ENCODE measurements at regions of chrX and their contacts with region 1.

Region 1: GRCh38 chrX:65034668-65035445 is 58.6 kb upstream of the ZC4H2 start:
- DNase-seq: peak; percentile 90
- H3K4me3 ChIP-seq: peak within 1 kb of the TSS; percentile 56 to 71 (median 60)
- H3K27ac ChIP-seq: peak within 1 kb of the TSS; percentile 82 to 91 (median 88)
- H3K4me1 ChIP-seq: peaks cover 0 to 7% (median 0%) of the 10 kb centered on the region in 4 donors
- H3K27me3 ChIP-seq: no peaks in the 10 kb centered on the region
- CTCF ChIP-seq: peak; percentile 33 to 64 (median 41)
- EP300 ChIP-seq: no peak
- POLR2A ChIP-seq: no peak

Region 2: GRCh38 chrX:64975989-64976672 is 58.7 kb before region 1 on chrX and contains the start of gene ZC4H2:
- intact Hi-C with region 1: loop called (anchors 2 kb)
- DNase-seq: peak; percentile 85
- H3K4me3 ChIP-seq: peak within 1 kb of the TSS; percentile 49 to 62 (median 56)
- H3K27ac ChIP-seq: peak within 1 kb of the TSS; percentile 51 to 73 (median 69)
- H3K4me1 ChIP-seq: peaks cover 0 to 5% (median 2%) of the 10 kb centered on the region in 4 donors
- H3K27me3 ChIP-seq: no peaks in the 10 kb centered on the region
- CTCF ChIP-seq: no peak
- EP300 ChIP-seq: no peak
- POLR2A ChIP-seq: no peak
- total RNA-seq, gene ZC4H2: 13.3 to 19.3 (median 17.3) TPM

Region 3: GRCh38 chrX:65196758-65197360 is 162.0 kb after region 1 on chrX:
- intact Hi-C with region 1: loop called (anchors 5 kb)
- DNase-seq: peak; percentile 63
- H3K4me3 ChIP-seq: peak overlapping the region in 2 of 4 donors; percentile 0 to 23
- H3K27ac ChIP-seq: no peak overlapping the region
- H3K4me1 ChIP-seq: no peaks in the 10 kb centered on the region
- H3K27me3 ChIP-seq: no peaks in the 10 kb centered on the region
- CTCF ChIP-seq: peak in 3 of 4 experiments; percentile 4 to 49 (median 20)
- EP300 ChIP-seq: no peak
- POLR2A ChIP-seq: no peak

Region 4: DNA sequence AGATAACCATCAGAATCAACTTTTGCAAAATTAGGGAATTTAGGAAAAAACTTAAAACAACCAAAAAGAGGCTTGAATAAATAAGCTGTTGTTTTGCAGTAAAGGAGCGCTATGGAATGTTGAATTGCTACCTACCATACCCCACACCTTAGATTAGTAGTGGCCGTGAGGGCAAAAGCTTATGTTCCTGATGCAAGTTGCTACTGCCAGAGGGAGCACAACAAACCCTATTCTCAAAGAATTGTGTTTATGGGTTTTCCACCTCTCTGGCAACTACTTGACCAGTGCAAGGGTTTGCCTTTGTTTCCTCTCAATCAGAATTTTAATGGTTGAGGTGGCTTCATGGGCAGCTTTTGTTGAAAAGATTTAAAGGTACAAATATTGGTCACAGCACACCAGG is 231.6 kb after region 1 on chrX:
- intact Hi-C with region 1: no loop called
- DNase-seq: no peak
- H3K4me3 ChIP-seq: no peak overlapping the region
- H3K27ac ChIP-seq: no peak overlapping the region
- H3K4me1 ChIP-seq: no peaks in the 10 kb centered on the region
- H3K27me3 ChIP-seq: no peaks in the 10 kb centered on the region
- CTCF ChIP-seq: no peak
- EP300 ChIP-seq: no peak
- POLR2A ChIP-seq: no peak

Region 5: DNA sequence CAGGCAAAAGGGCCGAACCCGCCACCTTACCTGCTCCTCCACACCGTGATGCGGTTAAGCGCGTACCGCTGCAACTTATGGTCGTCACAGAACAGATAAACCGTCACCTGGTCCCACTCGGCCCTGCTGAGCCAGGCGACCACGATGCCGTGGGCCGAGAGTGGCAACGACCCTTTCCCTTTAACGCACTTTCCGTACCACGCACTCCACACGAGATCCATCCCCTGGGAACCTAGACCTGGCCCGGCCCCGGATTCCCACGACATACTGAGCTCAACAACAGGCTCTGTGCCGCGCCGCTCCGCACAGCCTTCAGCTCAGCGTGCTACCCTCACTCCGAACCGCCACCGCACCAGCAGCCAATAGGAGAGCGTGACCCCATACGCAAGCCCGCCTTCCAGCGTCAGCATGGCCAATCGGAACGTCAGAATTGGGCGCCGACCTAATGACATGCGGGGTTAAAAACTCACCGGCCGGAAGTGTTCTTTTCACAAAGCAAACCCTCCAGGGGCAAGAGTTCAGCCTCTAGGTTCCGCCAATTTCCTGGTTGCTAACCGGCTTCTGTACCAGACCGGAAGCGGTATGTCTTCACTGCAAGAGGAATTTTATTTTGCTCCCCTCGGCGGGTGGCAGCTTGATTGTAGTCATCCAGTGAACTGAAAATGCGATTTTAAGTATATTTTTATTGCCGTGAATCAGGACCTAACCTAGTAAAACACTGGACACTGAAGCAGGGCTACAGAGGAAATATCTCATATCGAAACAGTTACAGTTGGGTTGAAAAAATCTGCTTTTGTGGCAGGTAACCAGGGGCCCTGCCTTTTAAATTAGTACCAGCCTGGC is 499.8 kb after region 1 on chrX and contains the start of gene LAS1L:
- intact Hi-C with region 1: loop called (anchors 10 kb)
- DNase-seq: peak; percentile 96
- H3K4me3 ChIP-seq: peak within 1 kb of the TSS; percentile 53 to 73 (median 64)
- H3K27ac ChIP-seq: peak within 1 kb of the TSS; percentile 59 to 78 (median 73)
- H3K4me1 ChIP-seq: peaks cover 0 to 12% (median 11%) of the 10 kb centered on the region in 4 donors
- H3K27me3 ChIP-seq: no peaks in the 10 kb centered on the region
- CTCF ChIP-seq: no peak
- EP300 ChIP-seq: no peak
- POLR2A ChIP-seq: peak in 1 of 2 donors; percentile 15
- total RNA-seq, gene LAS1L: 20.9 to 22.2 (median 21.3) TPM

Region 6: GRCh38 chrX:65859299-65859698 is 824.4 kb after region 1 on chrX:
- intact Hi-C with region 1: no loop called
- DNase-seq: no peak
- H3K4me3 ChIP-seq: no peak overlapping the region
- H3K27ac ChIP-seq: no peak overlapping the region
- H3K4me1 ChIP-seq: no peaks in the 10 kb centered on the region
- H3K27me3 ChIP-seq: peaks cover 0 to 3% (median 0%) of the 10 kb centered on the region in 3 donors
- CTCF ChIP-seq: no peak
- EP300 ChIP-seq: no peak
- POLR2A ChIP-seq: no peak